Activated CD4-positive, alpha-beta T cell treated with anti-CD3 and anti-CD28 coated beads, Interleukin-2, amount 10 ng/mL, durations not matched to agents 24 days and 14 days (primary cell): ENCODE measurements at regions of chr7 and their contacts with region 1.

Region 1: DNA sequence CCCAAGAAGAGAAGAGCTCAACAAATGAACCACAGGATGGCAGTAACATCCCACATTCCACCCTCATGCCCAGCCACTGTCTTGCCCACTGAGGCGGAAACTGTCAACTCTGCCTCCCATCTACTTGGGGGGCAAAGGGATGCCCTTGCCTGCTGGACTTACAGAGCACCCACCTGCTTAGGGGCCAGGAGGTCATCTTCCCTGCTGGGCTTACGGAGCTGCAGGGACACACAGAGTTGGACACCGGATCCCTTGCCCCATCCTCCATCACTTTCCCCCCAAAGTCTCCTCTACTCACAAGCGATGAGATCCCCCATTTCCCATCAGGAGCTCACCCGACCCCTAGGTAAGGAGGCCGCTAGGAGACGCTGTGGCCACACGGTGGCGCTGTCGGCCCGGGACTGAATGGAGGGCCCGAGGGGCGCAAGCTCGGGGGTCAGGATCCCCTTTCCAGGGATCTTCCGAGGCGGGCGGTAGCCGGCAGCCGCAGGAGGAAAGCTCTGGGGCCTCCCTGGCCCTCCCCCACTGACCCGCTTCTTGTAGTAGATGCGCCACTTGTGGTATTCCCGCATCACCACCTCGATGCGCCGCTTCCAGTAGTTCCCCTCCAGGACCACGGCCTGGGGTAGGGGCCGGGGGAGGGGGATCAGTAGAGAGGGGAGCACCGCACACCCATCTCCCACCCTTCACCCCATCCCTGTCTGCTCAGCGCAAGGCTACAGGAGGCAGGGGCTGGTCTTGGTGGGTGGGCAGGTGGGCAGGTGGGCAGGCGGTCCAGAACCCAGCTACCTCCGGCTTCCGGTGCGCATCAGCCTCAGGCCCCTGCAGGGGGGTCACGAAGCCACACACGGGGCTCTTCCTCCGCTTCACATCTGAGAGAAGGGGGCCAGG is 17.3 kb downstream of the MLXIPL start:
- DNase-seq: peak; percentile 90
- H3K4me3 Mint-ChIP-seq: no peak overlapping the region
- H3K27ac Mint-ChIP-seq: no peak overlapping the region
- H3K4me1 Mint-ChIP-seq: no peaks in the 10 kb centered on the region
- H3K27me3 Mint-ChIP-seq: peaks cover 13% of the 10 kb centered on the region

Region 2: GRCh38 chr7:73647725-73648592 is 40.9 kb after region 1 on chr7:
- intact Hi-C with region 1: loop called (anchors 5 kb)
- DNase-seq: peak; percentile 68
- H3K4me3 Mint-ChIP-seq: peak overlapping the region; percentile 44
- H3K27ac Mint-ChIP-seq: no peak overlapping the region
- H3K4me1 Mint-ChIP-seq: peaks cover 10% of the 10 kb centered on the region
- H3K27me3 Mint-ChIP-seq: peaks cover 56% of the 10 kb centered on the region

Region 3: DNA sequence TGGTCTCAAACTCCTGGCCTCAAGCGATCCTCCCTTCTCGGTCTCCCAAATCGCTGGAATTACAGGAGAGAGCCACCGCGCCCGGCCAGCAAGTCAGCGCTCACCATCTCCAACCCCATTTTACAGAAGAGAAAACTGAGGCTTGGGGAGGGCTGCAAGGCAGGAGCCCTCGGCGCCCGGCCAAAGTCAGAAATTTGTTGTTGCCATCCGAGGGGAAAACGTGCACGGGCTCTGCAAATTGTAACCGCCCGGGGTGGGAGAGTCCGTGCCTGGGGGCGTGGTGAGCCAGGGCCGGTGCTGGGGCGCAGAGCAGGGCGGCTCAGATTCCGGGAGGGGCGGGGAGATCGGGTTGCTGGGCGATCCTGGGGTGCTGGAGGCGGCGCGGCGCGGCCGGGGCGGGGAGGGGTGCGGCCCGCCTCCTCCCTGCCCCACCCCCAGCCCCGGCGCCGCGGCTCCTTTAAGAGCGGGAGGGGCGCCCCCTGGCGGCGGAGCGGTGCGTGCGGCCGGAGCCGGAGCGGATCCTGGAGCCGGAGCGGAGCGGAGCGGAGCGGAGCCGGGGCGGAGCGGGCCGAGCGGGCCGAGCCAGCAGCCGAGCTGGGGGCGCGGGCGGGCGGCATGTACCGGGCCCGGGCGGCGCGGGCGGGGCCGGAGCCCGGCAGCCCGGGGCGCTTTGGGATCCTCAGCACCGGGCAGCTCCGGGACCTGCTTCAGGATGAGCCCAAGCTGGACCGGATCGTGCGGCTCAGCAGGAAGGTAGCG is 60.5 kb after region 1 on chr7 and contains the start of gene VPS37D:
- intact Hi-C with region 1: loop called (anchors 1 kb)
- DNase-seq: peak; percentile 98
- H3K4me3 Mint-ChIP-seq: peak within 1 kb of the TSS; percentile 81
- H3K27ac Mint-ChIP-seq: no peak within 1 kb of the TSS
- H3K4me1 Mint-ChIP-seq: peaks cover 13% of the 10 kb centered on the region
- H3K27me3 Mint-ChIP-seq: peaks cover 46% of the 10 kb centered on the region
- total RNA-seq, gene VPS37D: 0.40 and 0.47 TPM in 2 replicates

Region 4: DNA sequence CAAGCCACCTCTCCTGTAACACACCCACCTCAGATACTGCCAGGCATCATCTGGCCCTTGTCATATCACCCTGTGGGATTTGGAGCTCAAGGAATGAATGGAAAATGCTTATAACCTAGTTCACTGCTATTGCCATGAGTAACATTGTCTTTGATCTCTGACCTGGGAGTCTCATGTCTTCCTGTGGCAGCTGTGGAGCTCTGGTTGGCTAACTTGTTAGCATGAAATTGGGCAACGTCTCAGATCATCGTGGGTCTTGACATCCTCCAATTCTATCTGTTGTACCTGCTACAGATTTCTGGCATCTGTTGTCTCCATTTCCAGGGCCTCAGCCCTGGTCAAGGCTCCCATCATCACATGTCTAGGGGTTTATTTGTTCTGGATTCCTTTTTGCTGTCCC is 251.8 kb after region 1 on chr7:
- intact Hi-C with region 1: loop called (anchors 5 kb)
- DNase-seq: no peak
- H3K4me3 Mint-ChIP-seq: no peak overlapping the region
- H3K27ac Mint-ChIP-seq: no peak overlapping the region
- H3K4me1 Mint-ChIP-seq: peaks cover 4% of the 10 kb centered on the region
- H3K27me3 Mint-ChIP-seq: peaks cover 15% of the 10 kb centered on the region

Region 5: DNA sequence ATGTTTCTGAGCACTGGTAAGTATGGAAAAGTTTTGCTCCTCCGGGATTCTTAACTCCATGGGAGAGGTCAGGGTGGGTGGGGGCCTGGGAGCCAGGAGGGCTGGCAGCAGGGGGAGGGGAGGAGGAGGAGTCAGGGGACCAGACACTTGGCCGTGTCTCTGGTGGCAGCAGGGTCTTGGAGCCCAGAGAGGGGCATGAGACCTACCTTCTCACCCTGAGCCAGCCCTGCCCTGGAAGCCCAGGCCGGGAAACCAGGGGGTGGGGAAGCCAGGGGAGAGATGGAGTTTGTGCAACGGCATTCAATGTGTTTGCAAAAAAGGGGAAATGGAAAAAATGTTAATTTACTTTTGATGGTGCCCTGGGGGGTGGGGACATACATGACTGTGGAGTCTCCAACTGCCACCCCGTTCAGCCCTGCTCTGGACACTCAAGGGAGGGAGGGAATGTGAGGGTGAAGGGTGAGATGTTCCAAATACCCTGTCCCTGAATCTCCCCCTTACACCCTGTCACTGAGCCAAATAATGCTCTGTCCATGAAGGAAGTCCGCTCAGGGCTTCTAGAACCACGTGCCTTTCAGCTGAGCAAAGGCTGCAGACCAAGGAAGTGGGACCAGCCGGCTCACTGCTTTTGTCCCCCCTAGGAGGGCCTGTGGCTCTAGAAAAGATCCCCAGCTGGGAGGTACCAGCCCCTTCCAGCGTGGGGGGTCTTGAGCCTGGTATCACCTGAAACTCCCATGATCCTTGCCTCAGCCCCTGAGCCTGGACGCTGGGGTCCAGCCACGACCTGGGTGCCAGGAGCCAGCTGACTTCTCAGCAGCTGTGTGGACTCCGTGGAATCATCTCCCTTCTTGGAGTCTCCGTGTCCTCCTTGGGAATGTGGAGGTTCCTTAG is 302.2 kb after region 1 on chr7:
- intact Hi-C with region 1: no loop called
- DNase-seq: no peak
- H3K4me3 Mint-ChIP-seq: no peak overlapping the region
- H3K27ac Mint-ChIP-seq: no peak overlapping the region
- H3K4me1 Mint-ChIP-seq: no peaks in the 10 kb centered on the region
- H3K27me3 Mint-ChIP-seq: no peaks in the 10 kb centered on the region